Endothelial cell of umbilical vein (primary cell): ENCODE measurements at regions of chr9 and their contacts with region 1.

Region 1: DNA sequence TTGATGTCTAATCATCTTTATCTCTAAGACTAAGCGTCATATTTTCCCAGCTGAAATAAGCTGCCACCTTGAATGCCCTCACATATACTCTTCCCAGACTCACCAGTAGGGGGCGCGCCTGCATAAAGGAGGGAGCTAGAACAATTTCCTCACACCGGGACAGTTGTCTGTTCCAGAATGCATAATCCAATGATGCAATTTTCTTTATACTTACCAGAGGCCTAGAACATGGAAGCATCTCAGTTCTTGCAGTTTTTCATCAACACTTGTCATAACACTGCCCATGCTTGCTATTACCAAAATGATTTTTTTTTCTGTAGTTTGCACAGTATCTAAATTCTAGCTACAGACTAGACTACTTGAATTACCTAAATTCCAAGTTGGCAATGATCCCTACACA is 203.9 kb downstream of the FRMD3 start:
- DNase-seq: peak; percentile 74
- H3K4me3 ChIP-seq: no peak overlapping the region
- H3K27ac ChIP-seq: no peak overlapping the region
- H3K4me1 ChIP-seq: peaks cover 3% of the 10 kb centered on the region
- H3K27me3 ChIP-seq: no peaks in the 10 kb centered on the region
- CTCF ChIP-seq: peak; percentile 79 to 90
- POLR2A ChIP-seq: no peak

Region 2: DNA sequence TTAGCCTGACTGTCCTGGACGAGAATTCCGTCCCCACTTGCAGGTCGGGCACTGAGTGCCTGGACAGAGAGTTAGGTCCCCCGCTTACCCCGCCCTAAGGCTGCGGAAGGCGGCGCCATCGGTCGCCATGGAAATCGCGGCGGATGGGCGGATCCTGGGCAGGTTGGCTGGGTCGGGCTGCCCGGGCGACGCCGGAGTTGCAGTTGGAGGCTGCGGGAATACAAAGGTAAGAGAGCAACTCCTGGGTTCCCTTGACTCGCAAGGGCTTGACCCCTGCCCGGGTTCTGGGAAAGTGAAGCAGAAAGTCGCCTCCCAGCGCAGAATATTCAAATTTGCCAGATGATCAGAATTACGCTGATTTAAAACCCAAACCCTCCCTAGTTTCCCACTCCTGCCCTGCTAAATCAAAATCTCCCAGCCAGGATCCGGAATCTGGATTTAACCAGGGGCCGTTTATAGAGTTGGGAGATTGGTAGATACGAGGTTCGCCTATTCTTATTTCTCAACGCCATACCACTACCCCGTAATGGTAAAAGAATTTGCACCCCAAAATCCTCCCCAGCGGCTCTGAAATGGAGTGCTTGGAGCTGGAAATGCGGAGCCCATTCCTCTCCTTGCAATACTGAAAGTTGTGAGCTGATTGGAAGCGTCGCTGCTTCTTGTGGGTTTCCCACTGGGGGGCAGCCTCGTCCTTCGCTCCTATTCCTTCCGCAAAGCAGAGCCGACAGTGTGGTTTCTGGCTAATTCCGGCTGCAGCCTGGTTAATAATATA is 115.0 kb before region 1 on chr9:
- CTCF ChIA-PET with region 1: interaction called, 102 read pairs
- POLR2A ChIA-PET with region 1: no interaction called
- dilution Hi-C with region 1: no loop called
- intact Hi-C with region 1: loop called (anchors 1 kb)
- DNase-seq: peak; percentile 84
- H3K4me3 ChIP-seq: peak overlapping the region; percentile 45 to 100 (median 98)
- H3K27ac ChIP-seq: peak overlapping the region; percentile 66
- H3K4me1 ChIP-seq: peaks cover 23% of the 10 kb centered on the region
- H3K27me3 ChIP-seq: no peaks in the 10 kb centered on the region
- CTCF ChIP-seq: peak; percentile 43 to 63
- POLR2A ChIP-seq: peak; percentile 41

Region 3: GRCh38 chr9:83296129-83296528 is 38.2 kb before region 1 on chr9:
- CTCF ChIA-PET with region 1: interaction called, 11 read pairs
- POLR2A ChIA-PET with region 1: no interaction called
- dilution Hi-C with region 1: no loop called
- intact Hi-C with region 1: no loop called
- DNase-seq: no peak
- H3K4me3 ChIP-seq: no peak overlapping the region
- H3K27ac ChIP-seq: no peak overlapping the region
- H3K4me1 ChIP-seq: peaks cover 15% of the 10 kb centered on the region
- H3K27me3 ChIP-seq: no peaks in the 10 kb centered on the region
- CTCF ChIP-seq: no peak
- POLR2A ChIP-seq: no peak

Region 4: GRCh38 chr9:83346655-83347420 is 12.5 kb after region 1 on chr9:
- CTCF ChIA-PET with region 1: interaction called, 58 read pairs
- POLR2A ChIA-PET with region 1: no interaction called
- dilution Hi-C with region 1: no loop called
- intact Hi-C with region 1: no loop called
- DNase-seq: no peak
- H3K4me3 ChIP-seq: no peak overlapping the region
- H3K27ac ChIP-seq: no peak overlapping the region
- H3K4me1 ChIP-seq: no peaks in the 10 kb centered on the region
- H3K27me3 ChIP-seq: no peaks in the 10 kb centered on the region
- CTCF ChIP-seq: no peak
- POLR2A ChIP-seq: no peak

Region 5: DNA sequence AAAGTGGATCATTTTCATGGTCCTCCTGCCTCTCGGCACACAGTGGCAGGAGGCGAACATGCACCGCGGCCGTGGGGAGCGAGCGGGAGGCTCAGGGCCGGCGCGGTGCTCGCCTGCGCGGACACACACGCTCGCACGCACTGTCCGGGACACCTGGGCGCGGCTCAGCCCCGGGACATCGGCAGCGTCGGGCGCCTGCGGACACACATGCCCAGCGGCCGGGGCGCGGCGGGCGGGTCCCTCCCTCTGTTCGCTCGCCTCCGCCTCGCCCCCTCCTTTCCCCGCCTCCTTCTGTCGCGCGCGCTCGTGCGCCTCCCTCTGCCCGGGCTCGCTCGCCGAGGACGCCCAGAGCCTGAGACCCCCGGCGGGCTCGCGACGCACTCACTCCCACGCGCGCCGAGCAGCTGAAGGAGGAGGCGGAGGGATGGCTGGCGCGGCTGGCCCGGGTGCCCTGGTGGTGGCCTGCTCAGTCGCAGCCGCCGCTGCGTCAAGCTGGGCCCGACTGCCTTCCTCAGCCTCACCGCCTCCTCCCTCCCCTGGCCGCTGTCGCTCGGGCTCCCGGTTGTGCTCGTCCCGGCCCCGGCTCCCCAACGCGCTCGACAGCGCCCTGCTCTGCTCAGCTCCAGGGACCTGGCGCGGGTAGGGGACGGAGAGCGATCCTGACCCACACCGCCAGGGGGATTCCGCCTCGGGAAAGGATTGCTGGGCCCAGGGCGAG is 204.0 kb after region 1 on chr9 and contains the start of gene FRMD3:
- CTCF ChIA-PET with region 1: interaction called, 280 read pairs
- POLR2A ChIA-PET with region 1: no interaction called
- dilution Hi-C with region 1: no loop called
- intact Hi-C with region 1: no loop called
- DNase-seq: peak; percentile 66
- H3K4me3 ChIP-seq: peak within 1 kb of the TSS; percentile 29 to 40 (median 36)
- H3K27ac ChIP-seq: no peak within 1 kb of the TSS
- H3K4me1 ChIP-seq: peaks cover 6% of the 10 kb centered on the region
- H3K27me3 ChIP-seq: peaks cover 8 to 19% of the 10 kb centered on the region in 2 experiments
- CTCF ChIP-seq: peak; percentile 61 to 79
- POLR2A ChIP-seq: no peak
- total RNA-seq, gene FRMD3: 6.1 and 7.3 TPM in 2 replicates

Region 6: DNA sequence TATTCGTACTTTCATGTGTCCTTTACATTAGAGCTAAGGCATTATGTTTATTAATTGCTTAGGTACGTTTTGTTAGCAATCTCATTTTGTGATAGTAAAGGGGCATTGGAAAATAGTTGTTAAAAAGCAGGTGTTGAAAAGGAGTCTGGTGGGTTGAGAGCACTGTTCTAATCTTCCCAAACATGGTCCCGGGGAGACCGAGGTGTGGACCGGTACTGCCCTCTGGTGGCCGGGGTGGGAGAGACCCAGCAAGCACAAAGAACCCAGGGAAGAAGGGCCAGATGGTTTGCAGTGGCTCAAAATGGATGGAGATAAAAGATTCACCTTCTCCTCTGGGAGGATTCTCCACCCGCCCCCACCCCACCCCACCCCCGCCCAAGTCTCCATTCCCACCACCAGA is 314.8 kb after region 1 on chr9:
- CTCF ChIA-PET with region 1: interaction called, 10 read pairs
- POLR2A ChIA-PET with region 1: no interaction called
- dilution Hi-C with region 1: no loop called
- intact Hi-C with region 1: no loop called
- DNase-seq: peak; percentile 32
- H3K4me3 ChIP-seq: no peak overlapping the region
- H3K27ac ChIP-seq: no peak overlapping the region
- H3K4me1 ChIP-seq: no peaks in the 10 kb centered on the region
- H3K27me3 ChIP-seq: no peaks in the 10 kb centered on the region
- CTCF ChIP-seq: peak; percentile 70 to 77
- POLR2A ChIP-seq: no peak